Endothelial cell of umbilical vein (primary cell): ENCODE measurements at regions of chr14 and their contacts with region 1.

Region 1: DNA sequence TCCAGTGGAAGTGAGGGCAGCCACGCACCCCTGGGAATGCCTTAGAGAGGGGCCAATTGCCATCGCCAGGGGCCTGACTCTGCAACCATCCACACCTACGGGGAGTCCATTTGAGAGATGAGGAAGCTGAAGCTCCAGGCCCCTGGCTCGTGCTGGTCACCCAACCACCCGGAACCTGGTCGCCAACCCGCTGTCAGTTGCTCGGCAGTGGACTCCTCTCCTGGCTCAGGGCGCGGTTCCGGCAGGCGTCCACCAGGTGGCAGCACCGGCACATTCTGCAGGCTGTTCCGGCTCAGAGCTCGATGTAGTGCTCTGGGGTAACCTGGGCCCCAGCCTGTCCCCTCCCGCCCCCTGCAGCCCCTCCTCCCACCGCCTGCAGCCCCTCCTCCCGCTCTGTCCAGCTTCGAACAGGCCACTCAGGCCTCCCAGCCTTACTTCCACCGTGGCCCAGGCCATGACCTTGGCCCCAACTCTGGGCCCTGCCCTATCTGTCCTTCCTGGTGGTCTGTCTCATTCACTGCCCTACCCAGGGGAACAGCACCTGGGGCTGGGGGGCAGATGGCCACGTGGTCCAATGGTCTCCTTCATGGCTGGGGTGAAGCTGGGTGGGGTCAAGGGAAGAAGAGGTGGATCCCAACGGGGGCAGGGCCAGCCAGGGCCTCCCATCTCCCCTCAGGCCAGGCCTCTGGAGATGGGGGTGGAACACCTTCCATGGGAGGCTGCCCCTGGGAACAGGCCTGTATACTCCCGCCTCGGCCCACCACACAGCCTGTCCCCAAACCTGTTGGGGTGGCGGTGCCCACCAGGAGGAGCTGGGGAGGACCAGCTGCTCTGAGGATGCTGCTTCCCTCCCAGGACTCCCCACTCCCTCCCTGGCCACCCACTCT is 15.7 kb downstream of the SIVA1 start:
- DNase-seq: peak; percentile 75
- H3K4me3 ChIP-seq: no peak overlapping the region
- H3K27ac ChIP-seq: no peak overlapping the region
- H3K4me1 ChIP-seq: peaks cover 8% of the 10 kb centered on the region
- H3K27me3 ChIP-seq: no peaks in the 10 kb centered on the region
- CTCF ChIP-seq: peak; percentile 73 to 96
- POLR2A ChIP-seq: no peak

Region 2: DNA sequence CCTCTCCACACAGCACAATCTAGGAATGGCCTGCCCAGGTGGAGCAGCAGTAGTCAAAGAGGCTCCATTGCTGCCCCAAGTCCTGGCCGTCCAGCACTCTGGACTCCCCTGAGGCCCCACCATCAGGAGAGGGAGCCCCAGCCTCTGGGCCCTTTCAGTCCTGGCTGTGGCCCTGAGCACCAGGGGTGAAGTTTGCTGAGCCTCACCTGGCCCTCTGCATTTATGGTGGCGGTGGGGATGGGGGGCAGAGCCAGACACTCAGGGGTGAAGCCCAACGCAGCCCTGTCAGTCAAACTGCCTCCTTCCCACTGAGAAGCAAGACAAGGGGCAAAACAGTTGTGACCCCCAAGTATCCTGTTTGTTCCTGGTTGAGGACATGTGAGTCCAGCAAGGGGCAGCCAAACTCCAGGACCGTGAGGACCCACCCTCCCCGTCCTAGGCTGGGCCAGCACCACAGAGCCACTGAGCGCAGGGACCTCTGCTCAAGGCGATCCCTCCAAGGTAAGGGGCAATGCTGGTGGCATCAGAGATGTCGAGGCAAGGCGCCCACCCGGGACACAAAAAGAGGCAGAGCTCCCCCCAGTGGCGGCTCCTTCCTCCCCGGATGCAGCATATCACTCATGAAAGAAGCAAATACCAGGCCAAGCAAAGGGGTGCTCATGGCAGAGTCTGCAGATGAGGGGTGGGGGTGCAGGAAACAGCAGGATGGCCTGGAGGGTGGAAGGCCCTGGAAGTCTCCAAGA is 1851.0 kb before region 1 on chr14:
- CTCF ChIA-PET with region 1: no interaction called
- POLR2A ChIA-PET with region 1: no interaction called
- dilution Hi-C with region 1: no loop called
- intact Hi-C with region 1: no loop called
- DNase-seq: peak; percentile 47
- H3K4me3 ChIP-seq: no peak overlapping the region
- H3K27ac ChIP-seq: no peak overlapping the region
- H3K4me1 ChIP-seq: no peaks in the 10 kb centered on the region
- H3K27me3 ChIP-seq: peaks cover 7 to 8% of the 10 kb centered on the region in 2 experiments
- CTCF ChIP-seq: peak; percentile 72 to 78
- POLR2A ChIP-seq: no peak

Region 3: DNA sequence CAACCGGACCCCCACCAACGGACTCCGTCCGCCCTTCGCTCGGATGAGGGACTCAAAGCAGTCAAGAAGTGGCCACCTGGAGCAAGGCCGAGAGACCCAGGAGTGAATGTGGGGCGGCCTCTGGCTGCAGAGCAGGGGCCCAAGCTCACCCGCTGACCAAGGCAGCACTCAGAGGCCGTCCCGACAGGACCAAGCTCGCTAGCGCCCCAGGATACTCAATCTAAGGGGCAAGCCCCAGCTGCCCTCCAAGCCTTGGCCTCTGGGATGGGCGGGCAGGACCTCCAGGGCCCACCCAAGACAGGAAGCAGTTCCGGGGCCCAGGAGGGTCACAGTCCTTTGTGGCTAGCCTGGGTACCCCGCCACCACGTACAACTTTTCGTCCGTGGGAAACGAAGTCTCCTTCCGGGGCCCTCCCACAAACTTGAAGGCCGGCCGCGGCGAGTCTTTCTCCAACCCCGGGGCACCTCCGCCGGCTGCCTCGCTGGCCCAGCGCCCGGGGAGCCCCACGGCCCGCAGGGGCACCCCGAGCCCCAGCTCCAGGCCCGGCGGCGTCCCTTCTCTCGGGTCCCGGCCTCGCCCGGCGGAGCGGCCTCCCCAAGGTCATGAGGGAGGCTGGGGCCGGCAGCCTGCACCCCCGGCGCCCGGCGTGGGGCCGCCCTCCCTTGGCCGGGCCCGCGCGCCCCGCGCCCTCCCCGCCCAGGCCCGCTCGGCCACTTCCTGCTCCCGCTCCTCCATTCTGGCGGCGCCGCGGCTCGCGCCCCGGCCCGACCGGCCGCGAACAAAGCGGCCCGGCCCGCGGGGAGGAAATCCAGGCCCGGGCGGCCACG is 26.2 kb after region 1 on chr14:
- CTCF ChIA-PET with region 1: interaction called, 14 read pairs
- POLR2A ChIA-PET with region 1: no interaction called
- dilution Hi-C with region 1: no loop called
- intact Hi-C with region 1: loop called (anchors 2 kb)
- DNase-seq: peak; percentile 30
- H3K4me3 ChIP-seq: peak overlapping the region; percentile 23 to 64 (median 27)
- H3K27ac ChIP-seq: peak overlapping the region; percentile 31
- H3K4me1 ChIP-seq: peaks cover 10% of the 10 kb centered on the region
- H3K27me3 ChIP-seq: no peaks in the 10 kb centered on the region
- CTCF ChIP-seq: no peak
- POLR2A ChIP-seq: no peak

Region 4: DNA sequence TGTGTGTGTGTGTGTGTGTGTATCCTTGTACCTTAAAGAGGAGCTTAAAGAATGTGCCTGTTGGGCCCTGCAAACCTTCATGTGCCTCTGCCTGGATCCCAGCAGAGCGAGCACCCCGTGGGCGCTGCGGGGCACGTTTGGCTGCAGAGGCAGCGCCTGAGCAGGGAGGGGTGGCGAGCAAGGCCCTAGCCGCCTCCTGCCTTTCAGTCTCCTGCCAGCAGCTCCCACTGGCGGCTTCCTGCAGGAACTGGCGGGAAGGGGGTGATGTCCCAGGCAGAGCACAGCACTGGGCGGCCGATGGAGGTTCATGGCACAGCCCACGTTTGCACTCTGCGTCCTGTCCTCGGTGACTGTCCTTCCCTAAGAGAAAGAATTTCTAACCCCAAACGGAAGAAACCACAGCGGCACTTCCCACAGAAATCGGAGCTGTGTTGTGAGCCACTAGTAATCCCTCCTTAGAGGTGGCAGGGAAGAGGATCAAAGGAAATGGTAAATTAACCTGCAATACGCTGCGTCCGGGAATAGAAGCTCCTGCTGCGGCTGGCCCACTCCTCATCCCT is 52.1 kb after region 1 on chr14:
- CTCF ChIA-PET with region 1: interaction called, 117 read pairs
- POLR2A ChIA-PET with region 1: no interaction called
- dilution Hi-C with region 1: no loop called
- intact Hi-C with region 1: loop called (anchors 1 kb)
- DNase-seq: peak; percentile 49
- H3K4me3 ChIP-seq: no peak overlapping the region
- H3K27ac ChIP-seq: no peak overlapping the region
- H3K4me1 ChIP-seq: peaks cover 9% of the 10 kb centered on the region
- H3K27me3 ChIP-seq: no peaks in the 10 kb centered on the region
- CTCF ChIP-seq: peak; percentile 49 to 75
- POLR2A ChIP-seq: no peak

Region 5: DNA sequence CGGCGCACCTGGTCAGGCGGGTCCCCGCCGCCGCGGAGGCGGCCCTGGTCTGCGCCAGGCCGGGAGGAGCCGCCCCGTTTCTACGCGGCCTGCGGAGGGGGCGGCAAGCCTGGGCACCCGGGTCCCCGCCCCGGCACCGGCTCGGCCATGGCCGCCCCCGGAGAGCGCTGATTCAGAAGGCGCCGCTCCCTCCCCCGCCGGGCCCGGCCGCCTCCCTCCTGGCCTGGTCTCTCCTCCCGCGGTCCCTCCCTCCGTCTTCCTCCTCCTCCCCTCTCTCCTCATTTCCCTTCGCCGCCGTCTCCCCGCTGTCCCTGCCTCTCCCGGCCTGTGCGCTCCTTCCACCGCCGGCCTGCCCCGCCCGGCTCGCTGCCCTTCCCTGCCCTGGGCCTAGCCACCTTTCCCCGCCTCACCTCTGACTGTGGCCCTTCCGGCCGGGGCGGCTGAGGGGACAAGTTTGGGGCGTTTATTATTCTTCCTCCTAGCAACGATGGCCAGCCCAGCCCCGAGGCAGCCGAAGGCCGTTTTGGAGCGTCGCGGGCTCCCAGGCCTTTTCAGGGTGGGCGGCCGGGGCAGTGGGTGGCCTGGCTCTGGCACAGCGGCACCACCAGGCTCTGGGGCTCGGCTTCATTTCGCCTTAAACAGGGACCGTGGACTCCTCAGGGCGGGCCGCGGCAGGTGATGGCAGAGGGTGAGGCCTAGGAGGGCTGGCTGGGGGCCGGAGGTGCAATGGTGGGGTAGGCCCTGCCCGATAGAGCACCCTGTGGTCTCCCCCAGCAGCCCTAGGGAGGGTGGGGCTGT is 97.2 kb after region 1 on chr14:
- CTCF ChIA-PET with region 1: interaction called, 11 read pairs
- POLR2A ChIA-PET with region 1: no interaction called
- dilution Hi-C with region 1: no loop called
- intact Hi-C with region 1: loop called (anchors 1 kb)
- DNase-seq: peak; percentile 65
- H3K4me3 ChIP-seq: peak overlapping the region; percentile 28 to 63 (median 44)
- H3K27ac ChIP-seq: peak overlapping the region; percentile 26
- H3K4me1 ChIP-seq: peaks cover 5% of the 10 kb centered on the region
- H3K27me3 ChIP-seq: peaks cover 13 to 16% of the 10 kb centered on the region in 2 experiments
- CTCF ChIP-seq: no peak
- POLR2A ChIP-seq: peak; percentile 51

Region 6: GRCh38 chr14:104976198-104977007 is 207.7 kb after region 1 on chr14:
- CTCF ChIA-PET with region 1: interaction called, 5 read pairs
- POLR2A ChIA-PET with region 1: no interaction called
- dilution Hi-C with region 1: no loop called
- intact Hi-C with region 1: loop called (anchors 10 kb)
- DNase-seq: peak; percentile 74
- H3K4me3 ChIP-seq: no peak overlapping the region
- H3K27ac ChIP-seq: no peak overlapping the region
- H3K4me1 ChIP-seq: peaks cover 39% of the 10 kb centered on the region
- H3K27me3 ChIP-seq: no peaks in the 10 kb centered on the region
- CTCF ChIP-seq: peak; percentile 90 to 98
- POLR2A ChIP-seq: no peak